Dorsolateral prefrontal cortex (tissue), 120 donors: ENCODE measurements at regions of chr9 and their contacts with region 1.

Region 1: DNA sequence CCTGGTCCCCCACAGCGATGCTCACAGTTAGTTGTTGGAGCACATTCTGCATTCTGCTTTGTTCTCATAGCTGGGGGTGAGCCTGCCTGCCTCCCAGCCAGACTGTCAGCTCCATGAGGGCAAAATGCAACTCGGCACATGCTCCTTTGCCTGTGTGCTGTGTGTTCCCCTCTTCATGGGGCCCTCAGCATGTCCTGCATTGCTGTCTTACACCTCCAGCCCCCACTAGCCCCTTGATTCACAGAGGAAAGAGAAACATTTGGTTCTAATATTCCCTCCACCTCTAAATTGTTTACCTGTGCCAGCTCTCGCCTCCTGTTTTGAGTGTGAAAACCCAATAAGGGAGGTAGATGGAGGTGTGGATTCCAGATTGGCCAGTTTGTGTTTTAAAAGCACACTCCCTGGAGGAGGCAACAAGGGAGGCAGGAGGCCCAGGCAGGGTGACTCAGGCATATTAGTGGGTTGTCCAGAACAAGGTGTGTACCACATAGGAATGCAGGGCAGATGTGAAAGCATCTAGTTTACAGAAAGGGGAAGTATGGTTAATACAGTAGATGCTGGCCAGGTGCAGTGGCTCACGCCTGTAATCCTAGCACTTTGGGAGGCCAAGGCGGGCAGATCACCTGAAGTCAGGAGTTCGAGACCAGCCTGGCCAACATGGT is 224.6 kb downstream of the AGTPBP1 start:
- DNase-seq: no peak
- H3K4me3 ChIP-seq: no peak overlapping the region
- H3K27ac ChIP-seq: peak overlapping the region in 12 of 59 donors; percentile 2 to 59 (median 22)
- H3K27me3 ChIP-seq: no peaks in the 10 kb centered on the region
- CTCF ChIP-seq: no peak

Region 2: DNA sequence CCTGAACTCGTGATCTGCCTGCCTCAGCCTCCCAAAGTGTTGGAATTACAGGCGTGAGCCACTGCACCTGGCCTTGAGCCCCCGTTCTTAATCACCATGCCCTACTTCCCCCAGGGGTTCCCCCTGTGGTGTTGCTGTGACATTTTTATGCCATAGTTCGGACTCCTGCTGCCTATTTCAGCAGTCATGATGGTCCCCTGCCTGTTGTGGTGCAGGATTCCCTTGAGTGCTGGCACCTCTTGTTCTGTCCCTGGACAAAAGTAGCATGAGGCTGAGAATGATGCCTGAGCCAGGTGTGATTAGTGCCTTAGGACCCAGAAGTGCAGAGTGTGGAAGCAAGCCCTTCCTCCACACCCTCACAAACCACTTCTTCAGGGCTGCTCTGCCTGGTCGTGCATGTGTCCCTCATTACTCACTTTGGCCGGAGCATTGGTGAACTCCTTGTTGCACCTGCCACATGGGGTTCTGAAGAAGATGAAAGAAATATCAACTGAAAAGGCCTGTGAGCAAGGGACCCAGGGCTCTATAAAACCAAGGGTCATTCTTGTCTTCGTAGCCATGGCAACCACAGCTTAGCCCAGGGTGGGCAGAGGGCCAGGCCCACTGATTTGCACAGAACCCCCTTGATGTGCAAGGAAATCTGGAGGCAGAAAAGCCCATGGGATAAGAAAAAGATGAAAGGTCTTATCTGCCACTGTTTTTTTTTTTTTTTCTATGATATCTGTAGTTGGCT is 619.6 kb before region 1 on chr9:
- intact Hi-C with region 1: no loop called
- DNase-seq: no peak
- H3K4me3 ChIP-seq: peak overlapping the region in 1 of 59 donors; percentile 0
- H3K27ac ChIP-seq: peak overlapping the region in 15 of 59 donors; percentile 10 to 57 (median 33)
- H3K27me3 ChIP-seq: no peaks in the 10 kb centered on the region
- CTCF ChIP-seq: no peak

Region 3: GRCh38 chr9:84990102-84990815 is 526.8 kb before region 1 on chr9:
- intact Hi-C with region 1: no loop called
- DNase-seq: peak in 9 of 10 donors; percentile 46 to 87 (median 68)
- H3K4me3 ChIP-seq: peak overlapping the region in 11 of 59 donors; percentile 3 to 21 (median 11)
- H3K27ac ChIP-seq: peak overlapping the region; percentile 60 to 99 (median 93)
- H3K27me3 ChIP-seq: no peaks in the 10 kb centered on the region
- CTCF ChIP-seq: no peak

Region 4: DNA sequence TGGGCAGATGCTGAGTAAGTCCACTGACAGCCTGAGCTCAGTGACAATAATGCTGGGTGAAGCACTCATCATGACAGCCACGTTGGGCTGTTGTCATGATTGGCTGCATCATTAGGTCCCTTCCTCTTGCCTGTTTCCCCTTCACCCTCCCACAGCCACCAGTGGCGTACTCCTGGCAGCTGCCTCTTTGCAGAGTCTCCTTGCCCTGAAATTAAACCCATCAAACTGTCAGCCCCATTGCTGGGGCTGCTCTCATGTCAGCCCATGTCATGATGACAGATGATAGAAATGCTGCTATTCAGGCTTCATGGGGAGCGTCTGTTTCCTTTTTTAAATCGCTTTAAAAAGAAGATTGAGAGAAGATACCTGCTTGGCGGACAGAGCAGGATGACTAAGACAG is 102.7 kb before region 1 on chr9:
- intact Hi-C with region 1: no loop called
- DNase-seq: peak in 1 of 10 donors; percentile 48
- H3K4me3 ChIP-seq: no peak overlapping the region
- H3K27ac ChIP-seq: peak overlapping the region in 39 of 59 donors; percentile 5 to 76 (median 46)
- H3K27me3 ChIP-seq: no peaks in the 10 kb centered on the region
- CTCF ChIP-seq: no peak

Region 5: GRCh38 chr9:85431339-85432102 is 85.6 kb before region 1 on chr9:
- intact Hi-C with region 1: loop called in 1 of 2 experiments (anchors 5 kb)
- DNase-seq: no peak
- H3K4me3 ChIP-seq: peak overlapping the region in 47 of 59 donors; percentile 0 to 50 (median 32)
- H3K27ac ChIP-seq: peak overlapping the region in 56 of 59 donors; percentile 14 to 93 (median 78)
- H3K27me3 ChIP-seq: no peaks in the 10 kb centered on the region
- CTCF ChIP-seq: no peak